ENCODE measurements at regions of chr7 and their contacts with region 1.

Region 1: GRCh38 chr7:66628361-66629140 is at the start of gene KCTD7:
- DNase-seq: peak; percentile 98
- CTCF ChIP-seq: no peak

Region 2: DNA sequence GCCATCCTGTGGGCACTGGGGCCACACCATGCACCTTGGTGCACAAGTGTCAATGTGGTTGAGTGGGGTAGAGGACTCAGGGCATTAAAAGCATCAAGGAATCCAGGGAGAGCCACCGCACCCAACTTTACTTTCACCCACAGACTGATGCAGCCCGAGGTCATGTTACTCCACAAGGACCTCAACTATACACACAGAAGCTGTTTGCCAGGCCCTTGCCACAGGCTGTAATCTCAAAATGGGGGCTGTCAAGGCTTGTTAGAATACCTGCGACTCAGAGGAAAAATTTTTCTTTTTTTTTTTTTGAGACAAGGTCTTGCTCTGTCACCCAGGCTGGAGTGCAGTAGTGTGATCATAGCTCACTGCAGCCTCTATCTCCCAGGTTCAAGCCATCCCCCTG is 26.4 kb before region 1 on chr7:
- CTCF ChIA-PET with region 1: no interaction called
- POLR2A ChIA-PET with region 1: no interaction called
- DNase-seq: no peak
- CTCF ChIP-seq: no peak

Region 3: DNA sequence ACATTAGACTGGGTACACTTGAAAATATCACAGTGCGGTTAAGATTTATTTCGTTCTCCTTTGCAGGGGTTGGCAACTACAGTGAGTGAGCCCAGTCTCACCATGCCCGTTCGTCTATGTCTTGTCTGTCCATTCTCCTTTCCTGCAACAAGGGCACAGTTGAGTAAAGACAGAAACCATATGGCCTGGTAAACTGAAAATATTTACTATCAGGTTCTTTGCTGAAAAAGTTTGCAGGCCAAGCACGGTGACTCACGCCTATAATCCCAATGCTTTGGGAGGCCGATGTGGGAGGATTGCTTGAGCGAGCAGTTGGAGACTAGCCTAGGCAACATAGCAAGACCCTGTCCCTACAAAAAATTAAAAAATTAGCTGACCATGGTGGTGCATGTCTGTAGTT is 11.3 kb before region 1 on chr7:
- CTCF ChIA-PET with region 1: no interaction called
- POLR2A ChIA-PET with region 1: no interaction called
- DNase-seq: no peak
- CTCF ChIP-seq: no peak

Region 4: DNA sequence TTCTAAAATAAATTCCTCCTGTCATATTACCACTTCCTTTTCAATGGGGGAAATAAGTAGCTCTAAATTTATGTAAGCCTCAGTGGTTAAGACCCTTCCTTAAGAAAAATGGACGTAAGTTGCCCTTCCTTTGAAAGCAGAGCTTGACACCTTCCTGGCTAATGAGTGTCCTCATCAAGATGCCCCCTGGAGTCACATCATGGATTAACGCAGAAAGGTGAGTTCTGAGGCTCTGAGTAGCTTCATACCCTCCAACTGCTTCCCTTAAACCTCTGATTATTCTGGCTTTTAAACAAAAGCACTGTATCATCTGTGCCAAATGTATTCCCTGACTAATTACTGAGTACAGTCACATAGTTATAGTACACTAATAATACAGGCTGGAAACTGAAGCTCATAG is 14.8 kb after region 1 on chr7:
- CTCF ChIA-PET with region 1: interaction called, 20 read pairs
- POLR2A ChIA-PET with region 1: interaction called, 8 read pairs
- DNase-seq: no peak
- CTCF ChIP-seq: no peak

Region 5: DNA sequence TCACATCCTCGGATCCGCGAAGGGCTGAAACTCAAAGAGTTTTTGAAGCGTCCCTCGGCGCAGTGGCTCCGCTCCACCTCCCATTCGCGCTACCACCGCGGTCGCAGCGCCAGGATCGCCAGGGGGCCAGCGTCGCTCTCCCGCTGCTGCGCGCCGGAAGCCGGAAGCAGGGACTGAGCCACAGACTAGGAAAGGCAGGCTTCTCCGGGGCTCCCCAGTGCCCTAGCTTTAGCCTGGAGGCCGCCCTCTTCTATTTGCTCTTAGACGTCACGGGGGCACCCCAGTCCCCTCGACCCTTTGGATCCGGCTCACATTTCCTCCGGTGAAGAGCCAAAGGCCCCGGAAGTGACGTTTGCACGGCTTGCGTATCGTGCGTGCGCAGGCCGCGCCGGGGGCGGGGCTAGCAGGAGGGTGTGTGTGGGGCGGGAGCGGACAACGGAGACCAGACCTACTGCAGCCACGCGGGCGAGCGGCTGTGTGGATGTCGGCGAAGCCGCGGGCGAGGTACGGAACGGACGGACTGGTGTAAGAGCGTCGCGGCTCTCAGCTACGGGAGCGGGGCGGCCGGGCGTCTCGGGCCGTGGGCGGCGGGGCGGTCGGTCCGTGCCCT is 25.7 kb after region 1 on chr7:
- CTCF ChIA-PET with region 1: interaction called, 3 read pairs
- POLR2A ChIA-PET with region 1: interaction called, 13 read pairs
- DNase-seq: peak; percentile 98
- CTCF ChIP-seq: peak; percentile 21